ENCODE measurements at regions of chr17 and their contacts with region 1.

Region 1: DNA sequence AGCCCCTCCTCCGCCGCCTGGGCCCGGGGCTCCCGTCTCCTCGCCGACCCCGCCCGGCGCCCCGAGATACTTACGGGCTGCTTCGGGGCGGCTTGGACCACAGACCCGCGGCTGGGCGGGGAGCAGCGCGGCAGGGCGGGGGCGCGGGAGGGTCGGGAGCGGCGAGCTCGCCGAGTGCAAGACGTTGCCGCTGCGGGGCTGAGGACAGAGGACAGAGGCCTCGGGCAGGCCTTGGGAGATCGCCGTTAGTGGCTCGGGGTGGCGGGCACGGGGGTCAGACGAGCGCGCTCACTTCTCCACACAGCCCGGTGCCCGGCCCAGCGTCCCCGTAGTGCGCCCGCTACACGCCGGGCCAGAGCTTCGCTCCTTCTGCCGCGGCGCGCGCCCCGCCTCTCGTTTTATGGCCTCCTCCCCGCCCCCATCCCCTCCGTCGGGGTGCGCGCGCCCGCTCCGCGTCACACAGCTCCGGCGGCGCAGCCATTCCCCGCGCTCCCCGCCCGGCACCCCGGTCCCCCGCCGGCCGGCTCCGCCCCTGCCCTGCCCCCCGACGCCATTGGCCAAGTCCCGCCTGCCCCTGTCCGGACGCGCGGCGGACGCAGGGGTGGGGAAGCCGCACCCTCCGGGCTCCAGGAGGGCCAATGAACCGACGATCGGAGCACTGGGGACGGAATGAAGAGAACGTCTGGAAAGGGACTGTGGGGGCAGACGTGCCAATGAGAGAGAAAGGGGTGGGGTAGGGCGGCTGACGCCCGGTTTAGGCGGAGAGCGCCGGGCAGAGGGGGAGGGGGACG is at the start of gene TOB1:
- DNase-seq: peak; percentile 96
- H3K4me3 Mint-ChIP-seq: peak within 1 kb of the TSS; percentile 88
- H3K27ac Mint-ChIP-seq: peak within 1 kb of the TSS; percentile 98
- H3K4me1 Mint-ChIP-seq: peaks cover 48% of the 10 kb centered on the region
- H3K27me3 Mint-ChIP-seq: no peaks in the 10 kb centered on the region
- total RNA-seq, gene TOB1: 81.8 to 99.0 TPM

Region 2: DNA sequence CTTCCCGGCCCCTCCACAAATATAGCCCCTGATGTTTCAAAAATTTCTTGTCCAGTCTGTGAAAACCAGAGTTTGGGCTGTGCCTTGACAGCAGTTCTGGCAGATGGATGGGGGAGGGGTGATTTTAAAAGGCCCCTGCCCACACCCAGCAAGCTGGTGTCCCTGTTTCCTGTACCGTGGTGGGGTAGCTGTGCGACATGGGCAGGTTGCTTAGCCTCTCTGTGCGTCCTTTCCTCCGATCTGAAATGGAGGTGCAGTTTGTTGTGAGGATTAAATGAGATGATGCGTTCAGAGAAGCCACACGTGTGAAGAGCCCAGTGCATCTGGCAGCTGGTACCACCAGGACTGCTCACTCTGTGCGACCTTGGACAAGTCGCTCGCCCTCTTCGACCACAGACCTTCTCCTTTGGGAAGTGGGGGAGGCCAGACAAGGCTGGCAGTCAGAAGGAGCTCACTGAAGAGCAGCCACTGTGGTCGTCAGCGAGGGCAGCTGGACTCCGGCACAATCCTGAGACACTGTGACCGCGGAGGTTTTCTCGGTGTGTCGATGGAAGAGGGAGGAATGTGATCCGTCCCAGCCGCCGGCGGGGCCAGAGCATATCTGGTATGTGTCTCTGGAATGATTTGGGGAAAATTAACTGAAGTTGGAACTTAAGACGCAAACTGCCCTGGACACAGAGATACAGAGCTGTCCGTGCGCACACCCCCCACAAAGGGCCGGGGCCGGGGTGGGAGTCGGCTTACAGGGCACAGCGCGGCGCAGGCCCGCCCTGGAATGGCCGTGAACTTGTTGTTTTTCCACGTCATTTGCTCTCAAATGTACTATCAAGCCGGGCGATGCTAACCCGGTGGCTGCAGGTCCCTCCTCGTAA is 31.5 kb before region 1 on chr17:
- CTCF ChIA-PET with region 1: no interaction called
- POLR2A ChIA-PET with region 1: no interaction called
- DNase-seq: no peak
- H3K4me3 Mint-ChIP-seq: no peak overlapping the region
- H3K27ac Mint-ChIP-seq: no peak overlapping the region
- H3K4me1 Mint-ChIP-seq: no peaks in the 10 kb centered on the region
- H3K27me3 Mint-ChIP-seq: peaks cover 12% of the 10 kb centered on the region

Region 3: DNA sequence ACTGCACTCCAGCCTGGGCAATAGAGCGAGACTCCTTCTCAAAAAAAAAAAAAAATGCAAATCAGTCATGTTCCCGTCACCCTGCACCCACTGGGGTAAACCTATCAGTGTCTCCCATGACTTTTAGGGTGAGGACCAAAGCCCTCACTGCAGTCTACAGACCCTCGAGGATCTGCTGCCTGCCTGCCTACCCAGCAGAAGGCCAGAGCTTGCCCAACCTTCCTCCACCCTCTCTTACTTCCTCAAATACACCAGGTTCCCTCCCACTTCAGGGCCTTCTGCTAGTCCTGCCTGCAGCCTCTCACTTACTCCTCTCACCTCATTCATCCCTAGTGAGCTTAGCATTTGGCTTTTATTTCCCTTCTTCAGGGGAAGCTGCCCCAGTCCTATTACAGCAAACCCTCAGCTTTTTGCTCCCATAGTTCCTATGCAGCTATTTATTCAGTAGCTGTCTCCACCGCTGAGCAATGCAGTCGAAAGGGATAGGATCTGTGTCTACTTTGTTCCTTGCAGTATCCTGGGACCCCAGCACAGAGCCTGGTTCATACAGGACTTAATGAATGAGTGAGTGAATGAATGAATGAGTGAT is 17.8 kb after region 1 on chr17:
- CTCF ChIA-PET with region 1: interaction called, 17 read pairs
- POLR2A ChIA-PET with region 1: no interaction called
- DNase-seq: no peak
- H3K4me3 Mint-ChIP-seq: no peak overlapping the region
- H3K27ac Mint-ChIP-seq: peak overlapping the region; percentile 48
- H3K4me1 Mint-ChIP-seq: peaks cover 44% of the 10 kb centered on the region
- H3K27me3 Mint-ChIP-seq: peaks cover 8% of the 10 kb centered on the region

Region 4: DNA sequence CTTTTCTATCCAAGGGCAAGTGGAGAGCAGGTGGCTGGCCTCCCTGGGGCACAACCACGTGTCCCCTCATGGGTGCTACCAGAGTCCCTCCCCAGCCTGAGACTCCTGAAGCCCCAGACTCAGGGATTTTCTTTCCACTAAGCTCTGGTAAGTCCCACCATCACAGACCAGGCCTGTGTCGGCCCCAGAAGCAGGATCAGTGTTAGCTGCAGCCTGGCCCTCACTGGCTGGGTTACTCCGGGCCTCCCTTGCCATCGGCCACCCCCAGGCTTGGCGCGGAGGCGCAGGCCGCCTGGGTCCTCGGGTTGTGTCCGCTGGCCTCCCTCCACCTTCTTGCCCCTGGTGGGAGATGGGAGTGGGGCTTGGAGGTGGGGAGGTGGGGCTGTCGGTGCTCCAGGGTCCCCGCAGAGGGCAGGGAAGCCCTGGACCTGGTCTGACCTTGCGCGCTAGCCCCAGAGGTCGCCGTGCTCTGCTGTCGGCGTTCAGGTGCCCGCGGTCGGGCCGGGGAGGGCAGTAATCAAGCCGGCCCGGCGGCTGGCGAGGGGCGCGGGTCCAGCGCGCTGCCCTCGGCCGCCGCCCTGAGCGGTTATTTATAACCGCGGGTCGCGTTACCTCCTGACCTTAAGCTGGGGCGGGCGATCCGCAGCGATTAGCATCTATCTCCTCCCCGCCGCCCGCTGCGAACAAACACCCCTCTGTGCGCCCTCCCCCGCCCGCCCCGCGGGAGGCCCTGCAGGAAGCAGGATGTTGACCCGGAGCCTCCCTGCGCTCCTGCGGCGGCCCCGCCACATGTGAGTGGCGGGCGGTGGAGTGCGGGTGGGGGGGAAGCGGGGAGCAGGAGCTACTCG is 78.1 kb after region 1 on chr17:
- CTCF ChIA-PET with region 1: interaction called, 12 read pairs
- POLR2A ChIA-PET with region 1: interaction called, 11 read pairs
- DNase-seq: peak; percentile 87
- H3K4me3 Mint-ChIP-seq: peak overlapping the region; percentile 76
- H3K27ac Mint-ChIP-seq: peak overlapping the region; percentile 89
- H3K4me1 Mint-ChIP-seq: peaks cover 46% of the 10 kb centered on the region
- H3K27me3 Mint-ChIP-seq: no peaks in the 10 kb centered on the region

Region 5: GRCh38 chr17:50949989-50950881 is 84.1 kb after region 1 on chr17:
- CTCF ChIA-PET with region 1: interaction called, 12 read pairs
- POLR2A ChIA-PET with region 1: interaction called, 11 read pairs
- DNase-seq: peak; percentile 55
- H3K4me3 Mint-ChIP-seq: no peak overlapping the region
- H3K27ac Mint-ChIP-seq: no peak overlapping the region
- H3K4me1 Mint-ChIP-seq: peaks cover 52% of the 10 kb centered on the region
- H3K27me3 Mint-ChIP-seq: no peaks in the 10 kb centered on the region